Transverse colon (tissue), 4 donors: ENCODE measurements at regions of chr1 and their contacts with region 1.

Region 1: DNA sequence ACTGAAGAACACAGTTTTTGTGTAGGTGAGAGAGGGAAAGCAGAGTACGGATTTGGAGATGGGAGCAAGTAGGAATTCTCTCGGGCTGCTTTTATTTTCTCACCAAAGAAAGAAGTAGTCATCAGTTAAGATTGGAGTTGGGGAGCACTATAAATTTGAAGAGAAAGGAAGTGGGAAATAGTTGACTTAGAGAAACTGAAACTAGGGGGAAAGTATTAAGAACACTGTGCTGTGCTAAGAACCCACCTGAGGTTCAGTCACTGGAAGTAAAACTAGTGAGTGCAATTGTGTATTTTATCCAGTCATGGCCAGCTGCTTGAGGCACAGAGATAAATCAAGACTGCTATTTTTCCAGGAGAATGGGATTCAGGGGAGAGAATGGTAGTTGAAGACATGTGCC is 37.4 kb downstream of the CLCC1 start:
- DNase-seq: no peak
- H3K4me3 ChIP-seq: no peak overlapping the region
- H3K27ac ChIP-seq: no peak overlapping the region
- H3K4me1 ChIP-seq: no peaks in the 10 kb centered on the region
- H3K27me3 ChIP-seq: no peaks in the 10 kb centered on the region
- CTCF ChIP-seq: no peak
- EP300 ChIP-seq: no peak
- POLR2A ChIP-seq: no peak

Region 2: GRCh38 chr1:108357802-108358201 is 568.1 kb before region 1 on chr1:
- in situ Hi-C with region 1: no loop called
- intact Hi-C with region 1: no loop called
- DNase-seq: no peak
- H3K4me3 ChIP-seq: no peak overlapping the region
- H3K27ac ChIP-seq: no peak overlapping the region
- H3K4me1 ChIP-seq: no peaks in the 10 kb centered on the region
- H3K27me3 ChIP-seq: no peaks in the 10 kb centered on the region
- CTCF ChIP-seq: no peak
- EP300 ChIP-seq: no peak
- POLR2A ChIP-seq: no peak

Region 3: GRCh38 chr1:108767115-108767514 is 158.8 kb before region 1 on chr1:
- in situ Hi-C with region 1: loop called in 1 of 4 experiments (anchors 10 kb)
- intact Hi-C with region 1: no loop called
- DNase-seq: no peak
- H3K4me3 ChIP-seq: no peak overlapping the region
- H3K27ac ChIP-seq: no peak overlapping the region
- H3K4me1 ChIP-seq: no peaks in the 10 kb centered on the region
- H3K27me3 ChIP-seq: no peaks in the 10 kb centered on the region
- CTCF ChIP-seq: no peak
- EP300 ChIP-seq: no peak
- POLR2A ChIP-seq: no peak

Region 4: GRCh38 chr1:108858240-108858950 is 67.5 kb before region 1 on chr1:
- in situ Hi-C with region 1: no loop called
- intact Hi-C with region 1: no loop called
- DNase-seq: no peak
- H3K4me3 ChIP-seq: no peak overlapping the region
- H3K27ac ChIP-seq: no peak overlapping the region
- H3K4me1 ChIP-seq: no peaks in the 10 kb centered on the region
- H3K27me3 ChIP-seq: no peaks in the 10 kb centered on the region
- CTCF ChIP-seq: no peak
- EP300 ChIP-seq: no peak
- POLR2A ChIP-seq: no peak